ENCODE measurements at regions of chr17 and their contacts with region 1.

Region 1: DNA sequence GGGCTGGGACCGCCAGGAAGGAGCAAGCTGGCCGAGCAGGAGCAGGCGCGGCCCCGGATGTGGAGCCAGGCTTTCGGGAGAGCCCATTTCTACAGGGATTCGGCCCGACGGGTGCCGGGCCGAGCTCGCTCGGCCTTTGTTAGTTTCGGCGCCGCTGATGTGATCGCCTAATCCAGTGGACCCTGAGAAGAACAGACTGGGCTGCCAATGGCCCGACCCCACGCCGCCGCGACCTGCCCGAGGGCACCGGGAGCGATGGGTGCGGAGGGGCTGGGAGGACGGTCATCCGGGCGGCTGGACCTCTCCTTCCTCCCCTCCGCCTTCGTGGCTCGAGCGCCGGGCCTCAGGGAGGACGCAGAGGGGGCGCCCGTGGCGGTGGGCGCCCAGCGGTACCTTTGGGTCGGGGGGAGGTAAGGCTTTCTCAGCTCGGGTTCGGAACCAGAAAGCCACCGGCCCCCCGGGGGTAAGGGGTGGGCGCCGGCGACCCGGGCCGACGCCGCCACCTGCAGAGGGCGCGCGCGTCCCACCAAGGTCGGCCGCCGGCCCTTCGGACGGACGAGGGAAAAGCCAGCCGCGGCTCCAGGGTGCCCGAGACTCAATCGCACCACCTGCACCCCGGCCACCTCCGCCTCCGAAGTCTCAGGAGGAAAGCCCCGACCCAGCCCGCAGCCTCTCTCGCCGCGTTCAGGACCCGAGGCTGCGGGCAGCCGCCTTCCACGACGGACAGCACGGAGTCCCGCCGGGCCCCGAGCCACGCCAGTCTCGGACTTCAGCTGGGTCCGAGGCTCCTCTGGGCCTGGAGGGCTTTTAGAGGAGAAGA is 7.1 kb downstream of the CBX8 start:
- DNase-seq: peak; percentile 54 to 57
- H3K4me3 ChIP-seq: no peak overlapping the region
- H3K27ac ChIP-seq: no peak overlapping the region
- H3K4me1 ChIP-seq: peaks cover 6 to 9% of the 10 kb centered on the region in 2 donors
- H3K27me3 ChIP-seq: peaks cover 37% of the 10 kb centered on the region
- CTCF ChIP-seq: peak; percentile 42 to 84 (median 74)
- POLR2A ChIP-seq: no peak

Region 2: GRCh38 chr17:79702034-79702433 is 87.7 kb before region 1 on chr17:
- intact Hi-C with region 1: no loop called
- DNase-seq: no peak
- H3K4me3 ChIP-seq: no peak overlapping the region
- H3K27ac ChIP-seq: no peak overlapping the region
- H3K4me1 ChIP-seq: no peaks in the 10 kb centered on the region
- H3K27me3 ChIP-seq: no peaks in the 10 kb centered on the region
- CTCF ChIP-seq: no peak
- POLR2A ChIP-seq: no peak

Region 3: DNA sequence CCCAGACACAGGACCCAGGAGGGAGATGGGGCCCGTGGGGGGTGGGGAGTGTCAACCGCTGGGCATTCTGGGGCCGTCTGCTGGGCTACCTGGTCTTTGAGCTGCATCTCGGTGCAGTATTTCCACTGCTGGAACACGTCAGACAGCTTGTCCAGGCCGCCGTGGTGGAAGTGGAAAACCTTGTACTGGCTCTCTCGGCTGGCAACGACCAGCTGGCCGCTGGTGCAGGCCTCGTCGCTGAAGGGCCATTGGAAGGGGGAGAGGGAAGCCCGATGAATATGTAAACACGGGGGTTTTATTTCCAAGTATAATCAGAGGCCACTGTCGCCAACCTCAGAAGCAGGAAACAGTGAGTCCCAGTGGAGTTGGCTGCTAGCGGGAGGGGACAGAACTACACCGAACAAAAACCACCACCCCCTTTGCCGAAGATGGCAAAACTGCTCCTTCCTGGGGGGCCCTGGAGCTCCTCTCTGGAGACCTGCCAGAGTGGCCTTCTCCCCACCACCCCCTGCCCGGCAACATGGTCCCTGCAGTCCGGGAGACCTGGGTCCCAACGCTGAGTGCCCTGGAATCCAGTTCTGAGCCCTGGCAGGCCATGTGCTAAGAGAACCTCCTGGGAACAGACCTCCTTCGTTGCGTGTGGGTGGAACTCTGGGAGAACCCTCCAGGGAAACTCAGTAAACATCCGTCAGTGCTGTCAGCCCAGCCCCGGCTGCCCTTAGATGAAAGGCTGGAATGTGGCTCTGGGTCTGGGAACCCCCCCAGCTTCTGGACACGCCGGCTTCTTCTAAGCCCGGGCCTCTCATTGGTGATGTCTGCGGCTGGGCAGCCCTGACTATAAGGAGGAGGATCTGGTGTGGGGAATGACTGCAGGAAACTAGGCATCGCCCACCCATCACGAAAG is 161.9 kb after region 1 on chr17:
- intact Hi-C with region 1: no loop called
- DNase-seq: peak; percentile 58 to 73
- H3K4me3 ChIP-seq: no peak overlapping the region
- H3K27ac ChIP-seq: peak overlapping the region in 2 of 3 donors; percentile 11 to 24
- H3K4me1 ChIP-seq: peaks cover 6 to 20% of the 10 kb centered on the region in 2 donors
- H3K27me3 ChIP-seq: no peaks in the 10 kb centered on the region
- CTCF ChIP-seq: no peak
- POLR2A ChIP-seq: no peak

Region 4: GRCh38 chr17:79991140-79991923 is 201.6 kb after region 1 on chr17:
- intact Hi-C with region 1: loop called (anchors 5 kb)
- DNase-seq: peak; percentile 84 to 86
- H3K4me3 ChIP-seq: no peak overlapping the region
- H3K27ac ChIP-seq: no peak overlapping the region
- H3K4me1 ChIP-seq: peaks cover 22 to 50% of the 10 kb centered on the region in 2 donors
- H3K27me3 ChIP-seq: no peaks in the 10 kb centered on the region
- CTCF ChIP-seq: peak in 3 of 6 experiments; percentile 26 to 84 (median 47)
- POLR2A ChIP-seq: no peak

Measured in thyroid gland (tissue), 4 donors.